ENCODE measurements at regions of chr1 and their contacts with region 1.

Region 1: GRCh38 chr1:19169642-19170041 is 40.4 kb downstream of the UBR4 start:
- DNase-seq: no peak
- ATAC-seq: no peak
- H3K4me3 ChIP-seq: no peak overlapping the region
- H3K27ac ChIP-seq: no peak overlapping the region
- H3K4me1 ChIP-seq: peaks cover 0 to 9% (median 0%) of the 10 kb centered on the region in 9 donors
- H3K27me3 ChIP-seq: no peaks in the 10 kb centered on the region
- CTCF ChIP-seq: no peak

Region 2: GRCh38 chr1:18956369-18957135 is 213.1 kb before region 1 on chr1 and contains the start of gene IFFO2:
- intact Hi-C with region 1: no loop called
- DNase-seq: peak; percentile 98 to 100
- ATAC-seq: peak; percentile 97 to 99 (median 98)
- H3K4me3 ChIP-seq: peak within 1 kb of the TSS; percentile 64 to 90 (median 84)
- H3K27ac ChIP-seq: peak within 1 kb of the TSS; percentile 42 to 85 (median 76)
- H3K4me1 ChIP-seq: peaks cover 1 to 47% (median 31%) of the 10 kb centered on the region in 9 donors
- H3K27me3 ChIP-seq: peaks cover 0 to 26% (median 0%) of the 10 kb centered on the region in 7 donors
- CTCF ChIP-seq: no peak
- total RNA-seq, gene IFFO2: 3.2 to 8.2 (median 4.7) TPM

Region 3: DNA sequence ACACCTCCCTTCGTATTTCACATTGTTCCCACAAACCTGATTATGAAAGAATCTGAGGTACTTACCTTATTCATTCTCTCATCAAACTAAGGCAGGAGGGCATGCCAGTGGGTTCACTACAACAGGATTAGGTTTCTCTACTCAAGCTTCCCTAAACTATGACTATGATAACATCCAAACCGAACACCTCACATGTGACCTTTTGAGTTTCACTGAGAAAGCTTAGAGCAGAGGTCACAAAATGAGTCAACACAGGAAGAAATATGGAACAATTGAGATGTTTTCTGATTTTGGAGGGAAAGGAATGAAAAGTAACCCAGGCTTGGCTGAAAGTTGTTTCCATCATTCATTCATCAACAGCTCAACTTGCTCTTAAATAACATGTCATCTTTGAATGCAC is 16.4 kb after region 1 on chr1:
- intact Hi-C with region 1: loop called in 1 of 10 experiments (anchors 2 kb)
- DNase-seq: no peak
- ATAC-seq: no peak
- H3K4me3 ChIP-seq: no peak overlapping the region
- H3K27ac ChIP-seq: no peak overlapping the region
- H3K4me1 ChIP-seq: no peaks in the 10 kb centered on the region
- H3K27me3 ChIP-seq: no peaks in the 10 kb centered on the region
- CTCF ChIP-seq: no peak

Measured in heart right ventricle (tissue), 16 donors.